ENCODE measurements at regions of chr19 and their contacts with region 1.

Region 1: GRCh38 chr19:16382775-16383543 is 58.3 kb downstream of the KLF2 start:
- DNase-seq: peak; percentile 86
- ATAC-seq: peak; percentile 74
- H3K4me3 Mint-ChIP-seq: no peak overlapping the region
- H3K27ac Mint-ChIP-seq: peak overlapping the region; percentile 58
- H3K4me1 Mint-ChIP-seq: peaks cover 40% of the 10 kb centered on the region
- H3K27me3 Mint-ChIP-seq: no peaks in the 10 kb centered on the region

Region 2: GRCh38 chr19:16041299-16041990 is 341.5 kb before region 1 on chr19:
- CTCF ChIA-PET with region 1: interaction called, 10 read pairs
- POLR2A ChIA-PET with region 1: no interaction called
- intact Hi-C with region 1: loop called in 1 of 2 experiments (anchors 1 kb)
- DNase-seq: peak; percentile 87
- ATAC-seq: peak; percentile 85
- H3K4me3 Mint-ChIP-seq: no peak overlapping the region
- H3K27ac Mint-ChIP-seq: no peak overlapping the region
- H3K4me1 Mint-ChIP-seq: peaks cover 4% of the 10 kb centered on the region
- H3K27me3 Mint-ChIP-seq: peaks cover 2% of the 10 kb centered on the region

Region 3: GRCh38 chr19:16247353-16248182 is 135.4 kb before region 1 on chr19:
- CTCF ChIA-PET with region 1: interaction called, 84 read pairs
- POLR2A ChIA-PET with region 1: interaction called, 4 read pairs
- intact Hi-C with region 1: loop called (anchors 1 kb)
- DNase-seq: peak; percentile 91
- ATAC-seq: peak; percentile 96
- H3K4me3 Mint-ChIP-seq: no peak overlapping the region
- H3K27ac Mint-ChIP-seq: no peak overlapping the region
- H3K4me1 Mint-ChIP-seq: peaks cover 13% of the 10 kb centered on the region
- H3K27me3 Mint-ChIP-seq: no peaks in the 10 kb centered on the region

Region 4: GRCh38 chr19:16283210-16284061 is 99.5 kb before region 1 on chr19:
- CTCF ChIA-PET with region 1: interaction called, 16 read pairs
- POLR2A ChIA-PET with region 1: no interaction called
- intact Hi-C with region 1: no loop called
- DNase-seq: peak; percentile 91
- ATAC-seq: peak; percentile 87
- H3K4me3 Mint-ChIP-seq: peak overlapping the region; percentile 46
- H3K27ac Mint-ChIP-seq: peak overlapping the region; percentile 79
- H3K4me1 Mint-ChIP-seq: peaks cover 32% of the 10 kb centered on the region
- H3K27me3 Mint-ChIP-seq: peaks cover 18% of the 10 kb centered on the region

Region 5: DNA sequence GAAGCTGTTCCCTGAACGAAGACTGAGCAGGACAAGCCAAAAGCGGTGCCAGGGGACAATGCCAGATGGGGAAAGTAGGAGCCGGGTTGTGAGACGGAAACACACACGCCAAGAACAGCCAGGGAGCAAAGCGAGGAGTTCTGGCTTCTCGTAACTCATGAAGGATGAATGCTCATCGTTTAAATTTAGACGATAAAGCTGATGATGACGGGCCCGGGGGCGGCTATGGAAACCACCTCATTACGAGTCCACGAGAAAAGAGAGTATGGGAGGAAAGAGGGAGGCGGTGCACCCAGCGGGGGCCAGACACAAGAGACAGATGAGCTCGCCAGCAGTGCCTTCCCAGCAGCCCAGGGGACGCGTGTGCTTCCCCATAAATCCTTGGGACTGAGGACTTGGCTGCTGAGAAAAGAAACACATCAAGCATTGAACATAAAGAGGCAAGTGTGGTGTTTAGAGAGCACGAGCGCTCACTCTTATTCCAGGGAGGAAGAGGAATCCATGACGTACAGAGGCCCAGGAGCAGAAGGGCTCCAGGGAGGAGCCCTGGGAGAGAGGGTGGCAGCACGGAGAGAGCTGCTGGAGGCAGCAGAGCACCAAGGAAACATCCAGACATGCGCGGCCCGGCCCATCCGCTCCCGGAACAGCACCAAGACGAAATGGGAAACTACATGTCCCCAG is 18.1 kb after region 1 on chr19:
- CTCF ChIA-PET with region 1: no interaction called
- POLR2A ChIA-PET with region 1: no interaction called
- intact Hi-C with region 1: no loop called
- DNase-seq: peak; percentile 53
- ATAC-seq: no peak
- H3K4me3 Mint-ChIP-seq: no peak overlapping the region
- H3K27ac Mint-ChIP-seq: peak overlapping the region; percentile 64
- H3K4me1 Mint-ChIP-seq: peaks cover 14% of the 10 kb centered on the region
- H3K27me3 Mint-ChIP-seq: no peaks in the 10 kb centered on the region

Region 6: DNA sequence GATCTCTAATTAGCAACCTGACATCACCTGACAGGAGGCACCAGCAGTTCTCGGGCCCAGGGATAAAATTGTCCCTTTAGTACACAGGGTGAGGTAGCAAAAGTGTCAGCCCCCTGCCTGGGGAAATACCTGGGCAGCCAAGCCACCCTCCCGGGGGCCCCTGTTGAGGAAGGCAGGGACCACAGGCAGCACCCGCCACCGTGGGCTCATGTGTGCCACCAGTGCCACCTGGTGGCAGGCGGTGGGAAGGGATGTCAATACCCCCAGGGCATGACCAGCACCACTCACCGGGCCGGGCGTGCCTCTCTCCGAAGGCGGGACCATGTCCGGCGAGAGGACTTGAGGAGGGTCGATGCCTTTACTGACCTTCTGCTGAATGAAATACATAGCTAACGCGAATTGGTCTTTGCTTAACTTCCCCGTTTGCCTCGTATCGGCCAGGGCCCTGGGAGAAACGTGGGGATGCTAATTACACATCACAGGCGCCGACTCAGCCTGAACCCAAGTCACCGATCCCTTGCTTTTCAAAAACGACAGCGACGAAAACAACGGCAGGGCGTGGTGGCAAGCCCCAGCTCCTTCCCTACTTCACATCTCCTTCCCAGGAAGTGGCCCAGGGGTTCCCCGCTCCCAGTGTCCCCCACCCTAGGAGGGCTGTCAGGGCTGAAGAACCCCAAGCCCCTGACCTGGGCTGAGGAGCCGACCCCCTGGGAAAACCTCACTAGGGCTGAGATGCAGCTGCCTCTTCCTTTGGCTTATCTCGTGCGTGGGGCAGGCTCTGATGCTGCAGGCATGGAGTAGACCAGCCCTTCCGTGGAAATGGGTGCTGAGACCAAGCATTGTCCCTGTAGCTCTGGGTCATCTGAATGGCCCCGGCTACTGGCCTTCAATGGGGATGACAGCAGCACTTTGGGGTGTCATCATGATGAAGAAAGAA is 35.0 kb after region 1 on chr19:
- CTCF ChIA-PET with region 1: interaction called, 12 read pairs
- POLR2A ChIA-PET with region 1: no interaction called
- intact Hi-C with region 1: no loop called
- DNase-seq: peak; percentile 79
- ATAC-seq: peak; percentile 97
- H3K4me3 Mint-ChIP-seq: no peak overlapping the region
- H3K27ac Mint-ChIP-seq: no peak overlapping the region
- H3K4me1 Mint-ChIP-seq: peaks cover 4% of the 10 kb centered on the region
- H3K27me3 Mint-ChIP-seq: no peaks in the 10 kb centered on the region

Measured in activated CD4-positive, alpha-beta T cell treated with anti-CD3 and anti-CD28 coated beads for 36 hours (primary cell).